Left ventricle myocardium superior (tissue), 1 donor: ENCODE measurements at regions of chr6 and their contacts with region 1.

Region 1: DNA sequence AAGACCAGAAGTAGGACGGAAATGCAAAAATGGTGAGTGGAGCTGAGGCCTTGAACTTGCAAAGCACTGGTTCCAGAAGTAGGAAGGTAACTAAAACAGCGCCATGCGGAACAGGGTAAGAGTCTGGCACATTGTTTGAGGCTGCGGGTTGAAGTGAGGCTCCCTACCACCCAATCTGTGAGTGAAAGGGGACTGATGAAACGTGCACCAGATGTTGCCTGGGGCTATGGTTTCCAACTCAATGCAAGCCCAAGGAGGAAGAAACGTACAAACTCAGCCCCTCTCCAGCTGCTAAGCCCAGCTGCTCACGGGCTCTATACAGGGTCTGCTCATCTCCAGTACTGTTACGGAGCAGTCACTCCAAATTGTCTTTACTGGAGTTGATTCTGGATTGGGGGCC is 68.7 kb upstream of the KCNK16 start:
- DNase-seq: no peak
- ATAC-seq: no peak

Region 2: GRCh38 chr6:39330057-39330456 is 61.1 kb before region 1 on chr6:
- intact Hi-C with region 1: loop called (anchors 2 kb)
- DNase-seq: no peak
- ATAC-seq: peak; percentile 74

Region 3: GRCh38 chr6:39508515-39508914 is 117.3 kb after region 1 on chr6:
- intact Hi-C with region 1: no loop called
- DNase-seq: no peak
- ATAC-seq: no peak

Region 4: GRCh38 chr6:39843305-39844020 is 452.3 kb after region 1 on chr6:
- intact Hi-C with region 1: no loop called
- DNase-seq: peak; percentile 45
- ATAC-seq: peak; percentile 49